CD4-positive, alpha-beta memory T cell (primary cell): ENCODE measurements at regions of chr11 and their contacts with region 1.

Region 1: DNA sequence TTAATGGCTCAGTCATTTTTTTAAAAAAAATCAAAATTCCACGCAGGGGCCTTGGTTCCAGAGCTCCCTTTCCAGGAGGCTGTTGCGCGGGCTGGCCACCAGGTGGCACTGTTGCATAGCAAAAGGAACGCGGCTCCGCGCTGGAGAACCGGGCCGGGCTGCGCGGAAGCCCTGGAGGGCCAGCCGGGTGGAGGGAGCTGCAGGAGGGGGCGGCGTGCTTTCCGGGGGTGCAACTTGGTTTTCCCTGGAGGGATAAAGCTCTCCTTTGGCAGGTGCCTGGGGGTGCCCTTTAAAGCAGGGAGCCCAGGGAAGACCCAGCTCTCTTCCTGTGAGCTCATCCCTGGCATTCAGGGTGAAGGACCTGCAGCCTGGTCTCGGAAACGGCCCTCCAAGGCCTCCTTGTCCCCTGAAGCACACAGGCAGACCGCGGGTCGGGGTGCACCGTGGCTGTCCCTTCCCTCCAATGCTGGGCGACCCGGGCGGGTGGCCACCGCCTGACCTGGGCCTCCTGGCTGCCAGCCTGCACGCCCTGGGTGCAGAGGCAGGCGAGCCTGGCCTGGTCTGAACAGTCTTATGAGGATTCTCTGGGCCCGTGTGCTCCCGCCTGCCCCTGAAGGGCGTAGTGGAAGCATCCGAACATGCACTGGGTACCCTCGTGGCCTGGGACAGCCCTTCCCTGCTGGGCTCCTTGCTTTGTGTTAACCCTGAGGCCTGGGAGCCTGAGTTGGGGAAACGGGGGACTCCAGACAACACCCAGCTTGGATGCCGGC is 23.4 kb downstream of the KRTAP5-5 start:
- DNase-seq: peak; percentile 62 to 79 (median 72)
- H3K4me3 ChIP-seq: no peak overlapping the region
- H3K4me3 Mint-ChIP-seq: no peak overlapping the region
- H3K27ac ChIP-seq: no peak overlapping the region
- H3K27ac Mint-ChIP-seq: peak overlapping the region in 1 of 7 donors; percentile 57
- H3K4me1 ChIP-seq: no peaks in the 10 kb centered on the region
- H3K4me1 Mint-ChIP-seq: peaks cover 0 to 2% (median under 1%) of the 10 kb centered on the region in 4 donors
- H3K27me3 ChIP-seq: no peaks in the 10 kb centered on the region
- H3K27me3 Mint-ChIP-seq: peaks cover 7 to 15% of the 10 kb centered on the region in 2 donors

Region 2: GRCh38 chr11:1628506-1629325 is 24.2 kb before region 1 on chr11:
- CTCF ChIA-PET with region 1: interaction called, 12 read pairs
- POLR2A ChIA-PET with region 1: no interaction called
- intact Hi-C with region 1: no loop called
- DNase-seq: peak; percentile 48 to 66 (median 51)
- H3K4me3 ChIP-seq: no peak overlapping the region
- H3K4me3 Mint-ChIP-seq: peak overlapping the region in 2 of 8 donors; percentile 26 to 44
- H3K27ac ChIP-seq: no peak overlapping the region
- H3K27ac Mint-ChIP-seq: peak overlapping the region in 2 of 7 donors; percentile 37 to 83
- H3K4me1 ChIP-seq: peaks cover 8% of the 10 kb centered on the region
- H3K4me1 Mint-ChIP-seq: peaks cover 0 to 9% (median 7%) of the 10 kb centered on the region in 4 donors
- H3K27me3 ChIP-seq: peaks cover 8% of the 10 kb centered on the region
- H3K27me3 Mint-ChIP-seq: peaks cover 19 to 26% of the 10 kb centered on the region in 2 donors

Region 3: DNA sequence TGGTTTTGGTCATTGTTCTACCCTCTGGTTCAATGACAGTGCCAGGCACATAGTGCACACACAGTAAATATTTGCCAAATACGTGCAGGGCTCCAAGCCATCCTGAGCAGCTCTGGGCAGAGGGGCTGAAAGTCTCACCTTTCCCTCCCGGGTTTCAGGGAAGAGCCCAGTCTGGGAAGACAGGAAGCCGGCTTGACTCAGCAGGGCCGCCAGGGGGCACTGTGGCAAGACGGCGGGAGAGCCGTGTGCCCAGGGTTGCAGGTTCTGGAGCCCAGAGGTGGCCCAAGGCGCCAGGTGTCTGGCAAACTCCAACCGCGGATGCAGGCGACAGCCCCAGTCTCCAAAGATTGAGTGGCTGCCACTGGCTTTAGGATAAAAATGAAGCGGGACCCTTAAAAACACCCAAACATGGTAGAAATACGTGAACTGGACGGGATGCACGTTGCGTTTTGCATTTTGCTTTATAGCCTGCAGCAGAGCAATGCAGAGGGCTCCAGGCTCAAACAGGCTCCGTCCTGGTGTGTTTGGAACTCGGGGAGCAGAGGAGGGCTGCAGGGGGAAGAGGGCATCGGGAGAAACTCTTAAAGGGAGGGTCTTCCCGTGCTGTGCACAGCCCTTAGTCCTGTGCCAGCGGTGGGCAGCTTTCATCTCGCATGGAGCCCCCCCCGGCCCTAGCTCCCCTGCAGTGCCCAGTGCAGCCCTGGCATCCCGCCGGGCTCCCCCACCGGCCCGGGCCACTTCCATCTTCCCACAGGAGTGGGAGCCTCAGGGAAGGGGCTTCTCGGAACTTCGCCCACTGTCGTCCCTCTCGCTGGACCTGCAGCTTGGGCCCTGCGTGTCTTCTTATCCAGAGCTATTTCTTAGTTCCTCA is 12.6 kb before region 1 on chr11:
- CTCF ChIA-PET with region 1: interaction called, 28 read pairs
- POLR2A ChIA-PET with region 1: no interaction called
- intact Hi-C with region 1: no loop called
- DNase-seq: peak in 4 of 5 donors; percentile 16 to 36 (median 20)
- H3K4me3 ChIP-seq: no peak overlapping the region
- H3K4me3 Mint-ChIP-seq: no peak overlapping the region
- H3K27ac ChIP-seq: no peak overlapping the region
- H3K27ac Mint-ChIP-seq: no peak overlapping the region
- H3K4me1 ChIP-seq: no peaks in the 10 kb centered on the region
- H3K4me1 Mint-ChIP-seq: peaks cover 0 to 5% (median under 1%) of the 10 kb centered on the region in 4 donors
- H3K27me3 ChIP-seq: peaks cover 5% of the 10 kb centered on the region
- H3K27me3 Mint-ChIP-seq: peaks cover 13 to 20% of the 10 kb centered on the region in 2 donors

Region 4: DNA sequence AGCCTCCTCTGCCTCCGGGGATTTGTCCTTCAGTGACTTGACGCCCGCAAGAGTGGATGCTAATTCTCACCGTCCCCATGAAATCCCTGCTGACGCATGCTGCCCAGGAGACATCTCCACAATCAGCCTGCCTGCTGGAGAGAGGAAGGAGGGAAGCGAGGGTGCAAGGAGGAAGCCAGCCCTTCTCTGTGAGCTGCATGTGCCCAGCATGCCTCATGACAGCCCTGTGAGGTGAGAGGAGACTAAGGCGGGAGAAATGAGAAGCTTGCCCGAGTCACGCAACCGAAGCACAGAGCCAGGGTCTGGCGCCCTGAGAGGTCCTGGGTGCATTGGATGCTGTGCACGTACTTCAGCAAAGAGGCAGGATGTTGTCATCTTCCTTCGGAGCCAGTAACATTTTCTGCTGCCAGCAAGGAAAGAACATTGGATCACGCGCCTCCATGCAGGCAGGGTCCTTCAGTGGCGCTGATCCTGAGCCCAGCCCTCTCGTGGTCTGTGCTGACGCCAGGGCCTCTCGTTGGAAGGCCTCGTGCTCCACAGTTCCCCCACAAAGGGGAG is 16.8 kb after region 1 on chr11:
- CTCF ChIA-PET with region 1: no interaction called
- POLR2A ChIA-PET with region 1: no interaction called
- intact Hi-C with region 1: no loop called
- DNase-seq: no peak
- H3K4me3 ChIP-seq: no peak overlapping the region
- H3K4me3 Mint-ChIP-seq: no peak overlapping the region
- H3K27ac ChIP-seq: no peak overlapping the region
- H3K27ac Mint-ChIP-seq: peak overlapping the region in 1 of 7 donors; percentile 32
- H3K4me1 ChIP-seq: no peaks in the 10 kb centered on the region
- H3K4me1 Mint-ChIP-seq: peaks cover 0 to 4% (median 0%) of the 10 kb centered on the region in 4 donors
- H3K27me3 ChIP-seq: peaks cover 3% of the 10 kb centered on the region
- H3K27me3 Mint-ChIP-seq: peaks cover 11 to 15% of the 10 kb centered on the region in 2 donors

Region 5: GRCh38 chr11:1682225-1682905 is 29.4 kb after region 1 on chr11:
- CTCF ChIA-PET with region 1: interaction called, 18 read pairs
- POLR2A ChIA-PET with region 1: no interaction called
- intact Hi-C with region 1: no loop called
- DNase-seq: no peak
- H3K4me3 ChIP-seq: no peak overlapping the region
- H3K4me3 Mint-ChIP-seq: no peak overlapping the region
- H3K27ac ChIP-seq: no peak overlapping the region
- H3K27ac Mint-ChIP-seq: no peak overlapping the region
- H3K4me1 ChIP-seq: no peaks in the 10 kb centered on the region
- H3K4me1 Mint-ChIP-seq: no peaks in the 10 kb centered on the region
- H3K27me3 ChIP-seq: no peaks in the 10 kb centered on the region
- H3K27me3 Mint-ChIP-seq: peaks cover 8 to 10% of the 10 kb centered on the region in 2 donors

Region 6: DNA sequence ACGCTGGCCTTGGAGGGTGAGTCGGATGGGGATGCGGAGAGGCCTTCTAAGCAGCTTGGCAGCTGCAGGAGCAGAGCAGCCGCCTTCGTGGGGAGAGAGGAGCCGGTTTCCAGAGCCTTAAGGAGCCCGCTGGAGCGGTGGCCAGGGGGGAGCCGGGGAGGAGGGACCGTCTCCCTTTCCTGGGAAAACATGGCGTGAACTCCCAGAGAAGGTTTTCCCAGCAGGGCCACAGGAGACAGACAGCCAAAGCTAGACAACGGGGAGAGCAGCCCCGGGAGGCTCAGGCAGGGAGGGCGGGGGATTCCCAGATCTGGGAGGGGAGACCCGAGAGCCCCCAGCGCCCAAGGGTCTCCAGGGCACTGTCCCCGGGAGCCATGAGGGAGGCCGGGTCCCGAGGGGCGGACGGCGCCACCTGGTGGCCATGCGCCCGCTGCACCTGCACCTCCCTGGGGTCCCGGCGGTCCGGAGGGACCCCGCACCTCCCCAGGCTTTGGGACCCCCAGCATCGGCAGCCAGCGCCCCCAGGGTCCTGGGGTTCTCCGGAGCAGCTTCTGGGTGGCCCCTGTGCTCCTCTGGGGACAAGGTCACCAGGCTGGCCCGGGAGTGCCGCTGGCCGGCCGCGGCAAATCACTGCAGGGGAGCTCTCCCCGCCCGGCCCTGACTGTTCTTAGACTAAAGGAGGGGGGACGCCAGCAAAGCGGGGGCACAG is 179.4 kb after region 1 on chr11:
- CTCF ChIA-PET with region 1: interaction called, 38 read pairs
- POLR2A ChIA-PET with region 1: interaction called, 3 read pairs
- intact Hi-C with region 1: no loop called
- DNase-seq: peak; percentile 33 to 71 (median 57)
- H3K4me3 ChIP-seq: no peak overlapping the region
- H3K4me3 Mint-ChIP-seq: no peak overlapping the region
- H3K27ac ChIP-seq: no peak overlapping the region
- H3K27ac Mint-ChIP-seq: peak overlapping the region in 1 of 7 donors; percentile 53
- H3K4me1 ChIP-seq: peaks cover 5% of the 10 kb centered on the region
- H3K4me1 Mint-ChIP-seq: no peaks in the 10 kb centered on the region
- H3K27me3 ChIP-seq: no peaks in the 10 kb centered on the region
- H3K27me3 Mint-ChIP-seq: peaks cover 7 to 14% of the 10 kb centered on the region in 2 donors

Region 7: GRCh38 chr11:2002807-2003206 is 349.9 kb after region 1 on chr11:
- CTCF ChIA-PET with region 1: interaction called, 21 read pairs
- POLR2A ChIA-PET with region 1: no interaction called
- intact Hi-C with region 1: no loop called
- DNase-seq: no peak
- H3K4me3 ChIP-seq: no peak overlapping the region
- H3K4me3 Mint-ChIP-seq: no peak overlapping the region
- H3K27ac ChIP-seq: no peak overlapping the region
- H3K27ac Mint-ChIP-seq: no peak overlapping the region
- H3K4me1 ChIP-seq: no peaks in the 10 kb centered on the region
- H3K4me1 Mint-ChIP-seq: no peaks in the 10 kb centered on the region
- H3K27me3 ChIP-seq: no peaks in the 10 kb centered on the region
- H3K27me3 Mint-ChIP-seq: no peaks in the 10 kb centered on the region

Region 8: GRCh38 chr11:2151500-2152257 is 498.7 kb after region 1 on chr11:
- CTCF ChIA-PET with region 1: interaction called, 45 read pairs
- POLR2A ChIA-PET with region 1: no interaction called
- intact Hi-C with region 1: loop called (anchors 1 kb)
- DNase-seq: peak; percentile 76 to 84 (median 78)
- H3K4me3 ChIP-seq: no peak overlapping the region
- H3K4me3 Mint-ChIP-seq: peak overlapping the region; percentile 20 to 67 (median 48)
- H3K27ac ChIP-seq: no peak overlapping the region
- H3K27ac Mint-ChIP-seq: peak overlapping the region in 5 of 7 donors; percentile 22 to 55 (median 26)
- H3K4me1 ChIP-seq: peaks cover 6% of the 10 kb centered on the region
- H3K4me1 Mint-ChIP-seq: peaks cover 5 to 11% (median 7%) of the 10 kb centered on the region in 4 donors
- H3K27me3 ChIP-seq: peaks cover 11% of the 10 kb centered on the region
- H3K27me3 Mint-ChIP-seq: peaks cover 10 to 31% of the 10 kb centered on the region in 2 donors